Right ventricle myocardium inferior (tissue), 1 donor: ENCODE measurements at regions of chr5 and their contacts with region 1.

Region 1: GRCh38 chr5:122295138-122295537 is 16.9 kb upstream of the SNCAIP start:
- DNase-seq: no peak
- ATAC-seq: no peak

Region 2: DNA sequence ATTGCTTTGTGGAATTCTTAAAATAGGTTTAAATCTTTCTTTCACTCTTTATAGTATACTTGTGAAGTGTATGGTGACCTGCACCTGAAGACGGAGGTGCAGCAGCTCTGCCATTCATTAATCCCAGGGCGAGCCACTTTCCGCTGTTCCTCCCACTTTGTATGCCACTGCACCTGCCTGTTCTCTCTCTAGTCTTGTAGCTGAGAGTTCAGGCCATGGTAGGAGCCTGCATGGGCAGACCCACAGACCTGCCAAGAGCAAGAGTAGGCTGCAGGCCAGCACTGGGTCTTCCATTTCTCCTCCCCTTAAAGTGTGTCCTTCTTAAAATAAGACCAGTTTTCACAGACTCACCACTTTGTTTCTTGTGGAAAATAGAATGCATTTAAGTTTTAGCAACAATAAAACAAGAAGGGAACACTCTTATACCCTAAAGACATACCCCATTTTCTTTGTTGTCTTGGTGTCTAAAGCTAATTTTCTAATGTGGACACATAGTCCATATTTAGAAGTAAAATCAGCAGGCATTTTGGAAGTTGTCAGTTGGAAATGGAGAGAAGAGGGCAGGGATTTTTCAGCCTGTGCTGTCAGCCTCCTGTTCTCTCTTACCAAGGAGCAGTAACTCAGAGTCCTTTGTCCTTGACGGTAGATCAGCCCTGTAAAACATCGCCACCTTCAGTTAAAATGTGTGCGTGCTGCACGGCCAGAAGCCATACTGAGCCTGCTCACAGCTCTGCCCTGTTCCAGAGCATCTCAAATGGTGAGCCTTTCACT is 120.1 kb after region 1 on chr5:
- intact Hi-C with region 1: loop called (anchors 5 kb)
- DNase-seq: peak; percentile 53
- ATAC-seq: peak; percentile 93